Mucosa of descending colon (tissue), 3 donors: ENCODE measurements at regions of chr3 and their contacts with region 1.

Region 1: DNA sequence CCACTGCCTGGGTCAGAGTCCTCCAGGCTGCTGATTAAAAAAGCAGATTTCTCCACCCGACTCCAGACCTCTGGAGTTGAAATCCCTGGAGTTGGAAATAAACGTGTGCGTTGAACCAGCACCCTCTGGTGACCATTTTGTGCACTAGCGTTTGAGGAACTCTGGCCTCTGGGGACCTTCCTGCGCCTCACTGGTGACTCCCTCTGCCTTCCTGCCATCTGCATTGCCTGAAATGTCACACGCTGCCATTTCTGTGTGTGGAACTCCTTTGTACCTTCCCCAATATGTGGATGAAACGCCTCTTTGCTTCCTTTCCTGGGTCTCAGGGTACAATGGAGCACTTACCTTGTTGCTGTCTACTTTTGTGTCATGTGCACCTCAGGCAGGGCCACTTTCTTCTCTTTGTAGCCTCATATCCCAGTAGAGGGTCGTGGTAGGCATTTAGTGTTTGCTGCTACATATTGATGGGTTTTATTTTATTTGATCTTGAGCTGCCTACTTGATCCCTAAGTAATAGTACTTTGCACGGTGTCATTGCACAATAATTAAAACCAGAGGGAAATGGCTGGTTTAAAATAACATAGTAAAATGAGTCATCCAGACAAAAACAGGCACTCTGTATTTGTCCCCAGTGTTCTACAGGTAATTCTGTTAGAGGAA is 56.8 kb downstream of the GPR171 start:
- DNase-seq: peak; percentile 63 to 78 (median 67)
- ATAC-seq: peak; percentile 97
- H3K4me3 ChIP-seq: no peak overlapping the region
- H3K4me1 ChIP-seq: peaks cover 8% of the 10 kb centered on the region
- CTCF ChIP-seq: peak; percentile 77

Region 2: DNA sequence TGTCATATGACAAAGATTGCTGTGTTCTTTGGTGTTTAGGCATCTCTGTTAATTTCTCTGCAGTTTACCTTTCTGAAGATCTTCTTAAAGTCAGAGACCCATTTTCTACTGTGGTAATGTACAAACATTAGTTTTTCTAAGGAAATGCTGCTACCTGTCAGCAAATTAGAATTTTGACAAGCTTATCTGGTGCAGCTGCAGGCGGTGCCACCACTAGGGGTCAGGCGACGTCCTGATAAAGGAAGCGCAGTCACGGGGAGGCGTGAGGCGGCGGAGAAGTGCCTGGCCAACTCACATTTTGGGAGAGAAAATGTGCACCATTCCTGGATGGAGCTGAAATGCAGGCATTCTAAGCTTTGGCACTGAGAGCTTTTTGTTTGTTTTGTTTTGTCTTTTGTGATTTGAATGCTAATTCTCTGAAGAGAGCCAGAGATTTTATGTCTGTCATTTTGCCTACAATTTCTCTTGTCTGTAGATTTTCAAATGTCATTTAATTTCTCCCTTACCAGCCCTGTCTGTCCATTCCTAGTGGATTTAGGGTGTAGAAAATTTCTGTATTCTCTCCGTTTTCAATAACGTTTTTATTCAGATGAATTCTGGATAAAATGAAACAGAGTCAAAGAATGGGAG is 358.3 kb before region 1 on chr3:
- intact Hi-C with region 1: loop called (anchors 5 to 10 kb)
- DNase-seq: peak; percentile 81 to 94 (median 88)
- ATAC-seq: peak; percentile 87
- H3K4me3 ChIP-seq: no peak overlapping the region
- H3K4me1 ChIP-seq: no peaks in the 10 kb centered on the region
- CTCF ChIP-seq: peak; percentile 86